ENCODE measurements at regions of chr6 and their contacts with region 1.

Region 1: DNA sequence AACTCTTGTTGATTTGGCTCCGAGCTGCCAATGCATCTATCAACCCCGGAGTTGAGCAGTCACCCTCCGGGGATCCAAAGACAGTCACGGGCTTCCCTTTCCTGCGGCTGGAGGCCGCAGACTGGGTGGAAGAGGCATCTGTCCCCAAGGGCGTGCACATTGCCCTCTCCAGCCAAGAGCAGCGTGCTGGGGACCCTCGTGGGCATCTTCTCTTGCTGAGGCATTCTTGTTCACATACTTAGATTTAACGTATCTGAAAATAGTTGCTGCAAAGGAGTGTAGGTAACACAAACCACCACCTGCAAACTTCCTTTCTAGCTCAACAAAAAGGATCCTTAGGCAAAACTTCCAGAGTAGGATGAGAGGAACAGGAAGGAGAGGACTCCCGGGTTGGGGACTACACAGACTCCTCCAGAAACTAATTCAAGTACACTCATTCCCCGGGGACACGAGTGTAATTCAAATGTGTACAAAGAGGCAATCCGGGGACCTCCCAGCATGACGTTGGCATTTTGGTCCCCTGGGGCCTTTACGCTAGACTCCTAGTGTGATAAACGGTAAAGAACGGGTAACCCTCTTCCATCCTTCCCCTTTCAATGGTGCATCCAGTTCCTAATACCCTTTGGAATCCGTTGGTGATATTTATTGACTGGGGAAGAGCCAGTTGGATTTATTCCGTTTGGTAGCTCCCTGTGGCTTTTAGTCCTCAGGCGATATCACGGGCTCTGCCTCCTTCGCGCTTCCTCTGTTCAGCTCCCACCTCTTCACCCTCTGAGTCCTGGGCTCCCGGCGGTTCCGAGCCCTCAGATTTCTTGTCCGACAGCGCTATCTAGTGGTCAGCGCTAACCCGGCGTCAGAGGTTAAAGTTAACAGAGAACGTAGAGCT is 2.7 kb upstream of the COL12A1 start:
- DNase-seq: peak; percentile 67 to 87 (median 76)
- ATAC-seq: peak; percentile 84
- H3K4me3 ChIP-seq: peak overlapping the region; percentile 35
- H3K4me3 Mint-ChIP-seq: peak overlapping the region; percentile 72
- H3K27ac ChIP-seq: no peak overlapping the region
- H3K27ac Mint-ChIP-seq: no peak overlapping the region
- H3K4me1 ChIP-seq: peaks cover 53% of the 10 kb centered on the region
- H3K4me1 Mint-ChIP-seq: peaks cover 54% of the 10 kb centered on the region
- H3K27me3 ChIP-seq: peaks cover 45 to 60% of the 10 kb centered on the region in 2 experiments
- H3K27me3 Mint-ChIP-seq: peaks cover 86% of the 10 kb centered on the region
- CTCF ChIP-seq: peak; percentile 85

Region 2: DNA sequence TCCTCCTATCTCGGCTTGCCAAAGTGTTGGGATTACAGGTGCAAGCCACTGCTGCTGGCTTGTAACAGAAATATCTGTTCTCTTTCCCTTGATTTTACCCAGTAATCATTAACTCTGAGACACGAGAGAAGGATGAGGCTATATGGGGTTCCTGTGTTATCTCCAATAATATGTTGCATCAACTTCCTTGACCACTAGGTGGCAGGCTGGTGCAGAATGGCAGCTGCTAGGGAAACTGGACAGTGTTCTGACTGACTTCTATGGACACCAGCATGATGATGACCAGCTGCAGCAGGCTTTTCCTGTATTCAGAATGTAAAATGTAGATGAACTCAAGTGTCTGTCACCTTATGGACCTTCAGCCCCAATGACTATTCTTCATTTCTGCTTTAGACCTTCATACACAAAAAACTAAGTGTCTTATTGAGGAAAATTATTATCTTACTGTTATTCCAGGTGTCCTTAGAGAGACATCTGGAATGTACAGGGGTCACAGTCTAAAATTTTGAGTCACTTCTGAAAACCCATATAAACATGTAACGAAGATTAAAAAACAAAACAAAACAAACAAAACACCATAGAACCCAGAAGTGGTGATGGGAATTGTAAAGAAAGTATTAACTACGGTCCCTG is 1533.0 kb before region 1 on chr6:
- CTCF ChIA-PET with region 1: interaction called, 4 read pairs
- POLR2A ChIA-PET with region 1: no interaction called
- intact Hi-C with region 1: loop called (anchors 1 to 2 kb)
- DNase-seq: peak; percentile 33 to 80 (median 56)
- ATAC-seq: peak; percentile 75
- H3K4me3 ChIP-seq: no peak overlapping the region
- H3K4me3 Mint-ChIP-seq: no peak overlapping the region
- H3K27ac ChIP-seq: no peak overlapping the region
- H3K27ac Mint-ChIP-seq: no peak overlapping the region
- H3K4me1 ChIP-seq: no peaks in the 10 kb centered on the region
- H3K4me1 Mint-ChIP-seq: peaks cover 4% of the 10 kb centered on the region
- H3K27me3 ChIP-seq: peaks cover 0 to 2% of the 10 kb centered on the region in 2 experiments
- H3K27me3 Mint-ChIP-seq: peaks cover 19% of the 10 kb centered on the region
- CTCF ChIP-seq: peak; percentile 91

Region 3: GRCh38 chr6:73732845-73733675 is 1475.5 kb before region 1 on chr6:
- CTCF ChIA-PET with region 1: interaction called, 90 read pairs
- POLR2A ChIA-PET with region 1: no interaction called
- intact Hi-C with region 1: no loop called
- DNase-seq: peak; percentile 48 to 84 (median 52)
- ATAC-seq: peak; percentile 100
- H3K4me3 ChIP-seq: no peak overlapping the region
- H3K4me3 Mint-ChIP-seq: no peak overlapping the region
- H3K27ac ChIP-seq: no peak overlapping the region
- H3K27ac Mint-ChIP-seq: no peak overlapping the region
- H3K4me1 ChIP-seq: no peaks in the 10 kb centered on the region
- H3K4me1 Mint-ChIP-seq: no peaks in the 10 kb centered on the region
- H3K27me3 ChIP-seq: no peaks in the 10 kb centered on the region
- H3K27me3 Mint-ChIP-seq: no peaks in the 10 kb centered on the region
- CTCF ChIP-seq: peak; percentile 81

Region 4: GRCh38 chr6:73739096-73739495 is 1469.4 kb before region 1 on chr6:
- CTCF ChIA-PET with region 1: interaction called, 90 read pairs
- POLR2A ChIA-PET with region 1: interaction called, 9 read pairs
- intact Hi-C with region 1: loop called (anchors 1 kb)
- DNase-seq: peak in 3 of 14 experiments; percentile 66 to 79 (median 78)
- ATAC-seq: peak; percentile 64
- H3K4me3 ChIP-seq: no peak overlapping the region
- H3K4me3 Mint-ChIP-seq: no peak overlapping the region
- H3K27ac ChIP-seq: no peak overlapping the region
- H3K27ac Mint-ChIP-seq: no peak overlapping the region
- H3K4me1 ChIP-seq: no peaks in the 10 kb centered on the region
- H3K4me1 Mint-ChIP-seq: no peaks in the 10 kb centered on the region
- H3K27me3 ChIP-seq: no peaks in the 10 kb centered on the region
- H3K27me3 Mint-ChIP-seq: no peaks in the 10 kb centered on the region
- CTCF ChIP-seq: peak; percentile 76

Region 5: DNA sequence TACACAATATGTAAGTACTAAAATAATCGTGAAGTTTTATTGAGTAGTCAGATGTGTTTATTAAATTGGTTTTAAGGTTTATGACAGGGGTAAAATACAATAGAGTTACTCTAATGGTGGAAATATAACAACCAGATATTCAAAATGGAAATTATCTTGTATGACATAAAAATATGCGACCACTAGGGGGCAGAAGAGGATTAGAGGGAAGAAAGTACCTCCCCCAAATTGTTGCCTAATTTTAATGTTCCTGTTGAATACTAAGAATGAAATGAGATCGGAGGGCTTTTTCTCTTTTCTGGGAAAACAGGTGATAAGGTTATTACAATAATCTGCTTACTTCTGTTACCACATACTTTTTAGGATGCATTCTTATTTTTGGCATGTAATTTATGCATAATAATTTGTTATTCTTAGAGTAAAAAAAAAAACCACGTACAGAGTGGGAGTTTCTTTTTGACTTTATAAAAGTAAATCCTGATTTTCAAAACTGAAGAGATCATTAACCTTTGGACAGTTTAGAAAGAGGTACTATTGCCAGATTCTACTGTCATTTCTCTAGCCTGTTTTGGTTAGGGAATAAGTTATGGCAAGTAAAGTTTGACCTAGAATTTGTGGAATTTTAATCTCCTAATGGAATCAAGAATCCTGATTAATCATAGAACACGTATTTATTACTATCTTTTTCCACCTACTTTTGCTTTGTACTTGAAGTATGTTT is 1353.4 kb before region 1 on chr6:
- CTCF ChIA-PET with region 1: interaction called, 3 read pairs
- POLR2A ChIA-PET with region 1: no interaction called
- intact Hi-C with region 1: loop called (anchors 1 to 2 kb)
- DNase-seq: peak in 5 of 14 experiments; percentile 9 to 69 (median 62)
- ATAC-seq: no peak
- H3K4me3 ChIP-seq: no peak overlapping the region
- H3K4me3 Mint-ChIP-seq: no peak overlapping the region
- H3K27ac ChIP-seq: no peak overlapping the region
- H3K27ac Mint-ChIP-seq: no peak overlapping the region
- H3K4me1 ChIP-seq: no peaks in the 10 kb centered on the region
- H3K4me1 Mint-ChIP-seq: no peaks in the 10 kb centered on the region
- H3K27me3 ChIP-seq: no peaks in the 10 kb centered on the region
- H3K27me3 Mint-ChIP-seq: no peaks in the 10 kb centered on the region
- CTCF ChIP-seq: peak; percentile 68

Region 6: GRCh38 chr6:74091136-74091793 is 1117.3 kb before region 1 on chr6:
- CTCF ChIA-PET with region 1: no interaction called
- POLR2A ChIA-PET with region 1: no interaction called
- intact Hi-C with region 1: loop called (anchors 2 kb)
- DNase-seq: peak in 3 of 14 experiments; percentile 8 to 20 (median 11)
- ATAC-seq: no peak
- H3K4me3 ChIP-seq: no peak overlapping the region
- H3K4me3 Mint-ChIP-seq: no peak overlapping the region
- H3K27ac ChIP-seq: no peak overlapping the region
- H3K27ac Mint-ChIP-seq: no peak overlapping the region
- H3K4me1 ChIP-seq: no peaks in the 10 kb centered on the region
- H3K4me1 Mint-ChIP-seq: no peaks in the 10 kb centered on the region
- H3K27me3 ChIP-seq: no peaks in the 10 kb centered on the region
- H3K27me3 Mint-ChIP-seq: peaks cover 11% of the 10 kb centered on the region
- CTCF ChIP-seq: peak; percentile 70

Region 7: GRCh38 chr6:74914888-74915287 is 293.7 kb before region 1 on chr6:
- CTCF ChIA-PET with region 1: no interaction called
- POLR2A ChIA-PET with region 1: no interaction called
- intact Hi-C with region 1: no loop called
- DNase-seq: no peak
- ATAC-seq: no peak
- H3K4me3 ChIP-seq: no peak overlapping the region
- H3K4me3 Mint-ChIP-seq: no peak overlapping the region
- H3K27ac ChIP-seq: no peak overlapping the region
- H3K27ac Mint-ChIP-seq: no peak overlapping the region
- H3K4me1 ChIP-seq: no peaks in the 10 kb centered on the region
- H3K4me1 Mint-ChIP-seq: no peaks in the 10 kb centered on the region
- H3K27me3 ChIP-seq: no peaks in the 10 kb centered on the region
- H3K27me3 Mint-ChIP-seq: no peaks in the 10 kb centered on the region
- CTCF ChIP-seq: no peak

Region 8: GRCh38 chr6:75526502-75527127 is 318.1 kb after region 1 on chr6:
- CTCF ChIA-PET with region 1: no interaction called
- POLR2A ChIA-PET with region 1: no interaction called
- intact Hi-C with region 1: loop called in 1 of 2 experiments (anchors 5 kb)
- DNase-seq: peak; percentile 2 to 79 (median 39)
- ATAC-seq: peak; percentile 82
- H3K4me3 ChIP-seq: no peak overlapping the region
- H3K4me3 Mint-ChIP-seq: no peak overlapping the region
- H3K27ac ChIP-seq: no peak overlapping the region
- H3K27ac Mint-ChIP-seq: no peak overlapping the region
- H3K4me1 ChIP-seq: no peaks in the 10 kb centered on the region
- H3K4me1 Mint-ChIP-seq: no peaks in the 10 kb centered on the region
- H3K27me3 ChIP-seq: peaks cover 0 to 16% of the 10 kb centered on the region in 2 experiments
- H3K27me3 Mint-ChIP-seq: peaks cover 52% of the 10 kb centered on the region
- CTCF ChIP-seq: peak; percentile 72

Measured in CD4-positive, alpha-beta T cell (primary cell).